Heart left ventricle (tissue), 16 donors: ENCODE measurements at regions of chr22 and their contacts with region 1.

Region 1: DNA sequence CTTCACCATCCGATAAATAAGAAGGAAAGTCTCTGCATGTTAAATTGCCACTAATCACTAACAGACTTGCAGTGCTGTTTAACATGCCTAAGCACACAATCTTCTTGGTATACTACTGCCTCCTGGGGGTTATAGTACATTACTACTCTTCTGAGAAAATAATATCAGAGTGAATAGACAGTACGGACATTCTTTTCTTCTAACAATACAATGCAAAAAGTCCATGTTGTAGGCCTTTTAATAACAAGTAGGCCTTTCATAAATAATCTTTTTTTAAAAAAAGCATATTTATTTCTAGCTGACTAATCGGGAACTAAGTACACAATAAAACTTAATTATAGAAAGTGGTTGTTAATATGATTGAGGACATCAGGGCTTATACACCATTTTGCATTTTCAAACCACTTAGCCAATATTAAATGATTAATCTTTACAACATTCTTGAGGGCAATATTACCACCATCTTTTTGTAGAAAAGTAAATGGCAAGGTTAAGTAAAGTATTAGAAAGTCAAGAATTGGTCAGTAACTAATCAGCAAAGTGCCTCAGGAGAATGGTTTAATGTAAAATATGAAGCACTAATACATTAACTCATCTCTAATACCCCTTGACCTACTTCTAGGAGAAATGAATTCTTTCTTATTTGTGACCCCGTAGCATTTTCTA is 84.7 kb downstream of the TTC28 start:
- DNase-seq: no peak
- ATAC-seq: peak; percentile 79 to 93 (median 86)
- H3K4me3 ChIP-seq: no peak overlapping the region
- H3K27ac ChIP-seq: no peak overlapping the region
- H3K4me1 ChIP-seq: peaks cover 0 to 4% (median 0%) of the 10 kb centered on the region in 12 donors
- H3K27me3 ChIP-seq: no peaks in the 10 kb centered on the region
- CTCF ChIP-seq: peak; percentile 64 to 93 (median 78)
- POLR2A ChIP-seq: no peak

Region 2: GRCh38 chr22:27880778-27881394 is 714.0 kb before region 1 on chr22:
- intact Hi-C with region 1: loop called in 5 of 10 experiments (anchors 5 to 10 kb)
- DNase-seq: peak in 1 of 5 donors; percentile 39
- ATAC-seq: peak; percentile 72 to 79 (median 76)
- H3K4me3 ChIP-seq: no peak overlapping the region
- H3K27ac ChIP-seq: peak overlapping the region in 6 of 12 donors; percentile 12 to 81 (median 36)
- H3K4me1 ChIP-seq: peaks cover 9 to 72% (median 50%) of the 10 kb centered on the region in 12 donors
- H3K27me3 ChIP-seq: no peaks in the 10 kb centered on the region
- CTCF ChIP-seq: peak; percentile 71 to 90 (median 84)
- POLR2A ChIP-seq: no peak

Region 3: GRCh38 chr22:28051787-28052356 is 543.1 kb before region 1 on chr22:
- intact Hi-C with region 1: loop called (anchors 1 to 5 kb)
- DNase-seq: peak; percentile 56 to 79 (median 69)
- ATAC-seq: peak in 3 of 4 donors; percentile 62 to 77 (median 66)
- H3K4me3 ChIP-seq: no peak overlapping the region
- H3K27ac ChIP-seq: no peak overlapping the region
- H3K4me1 ChIP-seq: peaks cover 0 to 22% (median 5%) of the 10 kb centered on the region in 12 donors
- H3K27me3 ChIP-seq: no peaks in the 10 kb centered on the region
- CTCF ChIP-seq: peak; percentile 70 to 95 (median 89)
- POLR2A ChIP-seq: no peak

Region 4: DNA sequence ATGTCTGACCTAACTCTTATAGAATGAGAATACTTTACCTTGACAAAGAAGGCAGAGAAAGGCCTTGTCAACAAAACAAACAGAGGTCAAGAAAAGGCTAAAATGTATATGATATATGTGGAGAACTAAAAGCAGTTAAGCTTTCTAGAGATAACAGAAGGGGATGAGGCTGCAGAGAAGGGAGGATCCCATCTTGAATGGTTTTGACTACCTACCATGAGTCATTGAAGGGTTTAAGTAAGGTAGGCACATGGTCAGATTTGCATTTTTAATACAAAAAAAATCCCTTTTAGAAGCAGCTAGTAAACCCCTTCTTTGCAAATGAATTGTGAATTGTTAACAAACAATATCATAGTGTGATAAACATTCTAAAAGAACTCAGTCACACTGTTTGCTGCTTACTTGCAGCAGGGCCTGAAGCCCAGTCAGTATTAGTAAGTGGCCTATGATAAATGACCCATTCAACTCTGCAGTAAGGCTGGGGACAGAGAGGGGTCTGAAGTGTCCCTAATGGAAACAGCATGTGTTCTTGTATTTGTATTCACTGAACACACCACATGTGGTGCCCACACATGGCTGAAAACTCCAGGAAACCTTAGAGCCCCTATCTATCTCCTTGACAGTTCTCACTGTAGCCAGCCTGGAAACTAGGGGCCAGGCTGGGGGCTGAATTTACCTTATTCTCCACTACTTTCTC is 347.1 kb before region 1 on chr22:
- intact Hi-C with region 1: loop called in 2 of 10 experiments (anchors 10 kb)
- DNase-seq: no peak
- ATAC-seq: peak in 1 of 4 donors; percentile 52
- H3K4me3 ChIP-seq: no peak overlapping the region
- H3K27ac ChIP-seq: peak overlapping the region in 2 of 12 donors; percentile 63 to 65
- H3K4me1 ChIP-seq: peaks cover 0 to 65% (median 37%) of the 10 kb centered on the region in 12 donors
- H3K27me3 ChIP-seq: no peaks in the 10 kb centered on the region
- CTCF ChIP-seq: no peak
- POLR2A ChIP-seq: no peak

Region 5: DNA sequence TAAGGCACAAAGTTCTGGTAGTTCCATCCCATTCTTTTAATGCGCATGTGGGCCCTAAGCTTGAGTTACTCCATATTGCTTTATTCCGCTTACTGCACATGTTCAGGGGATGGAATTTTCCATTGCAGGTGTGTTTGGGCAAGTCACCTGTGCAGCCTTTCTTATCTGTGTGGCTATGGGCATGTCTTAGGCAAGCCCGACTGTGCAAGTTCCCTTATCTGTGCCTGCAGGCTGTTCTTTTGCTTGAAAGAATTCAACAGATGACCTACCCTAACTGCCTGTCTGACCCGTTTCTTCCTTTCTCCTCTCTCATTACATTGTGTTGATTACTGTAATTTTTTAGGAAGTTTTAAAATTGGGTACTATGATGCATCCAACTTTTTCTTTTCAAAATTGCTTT is 278.9 kb before region 1 on chr22:
- intact Hi-C with region 1: no loop called
- DNase-seq: no peak
- ATAC-seq: no peak
- H3K4me3 ChIP-seq: no peak overlapping the region
- H3K27ac ChIP-seq: no peak overlapping the region
- H3K4me1 ChIP-seq: no peaks in the 10 kb centered on the region
- H3K27me3 ChIP-seq: no peaks in the 10 kb centered on the region
- CTCF ChIP-seq: no peak
- POLR2A ChIP-seq: no peak

Region 6: DNA sequence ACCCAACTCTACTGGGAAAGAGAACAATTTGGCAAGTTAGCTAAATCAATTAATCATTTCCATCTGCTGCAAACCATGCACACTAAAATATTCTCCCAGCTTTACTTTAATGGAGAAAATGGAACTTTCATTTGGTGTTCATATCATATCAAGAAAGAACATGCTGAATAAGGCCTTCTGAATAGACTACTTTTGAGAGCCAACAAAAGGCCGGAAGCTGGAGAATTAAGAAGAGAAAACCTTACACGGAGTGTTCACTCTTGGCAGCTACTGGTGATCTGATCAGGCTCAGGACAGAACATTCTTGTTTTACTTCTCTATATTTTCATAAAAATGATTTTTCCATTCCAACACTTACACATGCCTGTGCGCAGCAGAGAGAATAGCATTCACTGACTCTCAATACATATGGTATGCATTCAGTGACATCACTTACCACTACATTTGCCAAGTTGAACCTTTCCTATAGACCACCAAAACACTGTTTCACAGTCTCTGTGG is 80.6 kb before region 1 on chr22:
- intact Hi-C with region 1: no loop called
- DNase-seq: no peak
- ATAC-seq: peak; percentile 26 to 59 (median 42)
- H3K4me3 ChIP-seq: no peak overlapping the region
- H3K27ac ChIP-seq: no peak overlapping the region
- H3K4me1 ChIP-seq: peaks cover 0 to 14% (median 0%) of the 10 kb centered on the region in 12 donors
- H3K27me3 ChIP-seq: no peaks in the 10 kb centered on the region
- CTCF ChIP-seq: no peak
- POLR2A ChIP-seq: no peak

Region 7: GRCh38 chr22:28741758-28742561 is 147.0 kb after region 1 on chr22 and contains the starts of genes CHEK2 and HSCB:
- intact Hi-C with region 1: no loop called
- DNase-seq: peak; percentile 98 to 99 (median 99)
- ATAC-seq: peak; percentile 98 to 99 (median 99)
- H3K4me3 ChIP-seq: peak within 1 kb of the TSS; percentile 67 to 99 (median 83)
- H3K27ac ChIP-seq: peak within 1 kb of the TSS; percentile 95 to 100 (median 99)
- H3K4me1 ChIP-seq: peaks cover 0 to 17% (median 10%) of the 10 kb centered on the region in 12 donors
- H3K27me3 ChIP-seq: no peaks in the 10 kb centered on the region
- CTCF ChIP-seq: peak in 4 of 12 donors; percentile 15 to 20 (median 16)
- POLR2A ChIP-seq: peak in 1 of 2 donors; percentile 65
- total RNA-seq, gene CHEK2: 1.1 to 7.8 (median 1.6) TPM
- total RNA-seq, gene HSCB: 7.4 to 18.3 (median 10.9) TPM